ENCODE measurements at regions of chrX and their contacts with region 1.

Region 1: DNA sequence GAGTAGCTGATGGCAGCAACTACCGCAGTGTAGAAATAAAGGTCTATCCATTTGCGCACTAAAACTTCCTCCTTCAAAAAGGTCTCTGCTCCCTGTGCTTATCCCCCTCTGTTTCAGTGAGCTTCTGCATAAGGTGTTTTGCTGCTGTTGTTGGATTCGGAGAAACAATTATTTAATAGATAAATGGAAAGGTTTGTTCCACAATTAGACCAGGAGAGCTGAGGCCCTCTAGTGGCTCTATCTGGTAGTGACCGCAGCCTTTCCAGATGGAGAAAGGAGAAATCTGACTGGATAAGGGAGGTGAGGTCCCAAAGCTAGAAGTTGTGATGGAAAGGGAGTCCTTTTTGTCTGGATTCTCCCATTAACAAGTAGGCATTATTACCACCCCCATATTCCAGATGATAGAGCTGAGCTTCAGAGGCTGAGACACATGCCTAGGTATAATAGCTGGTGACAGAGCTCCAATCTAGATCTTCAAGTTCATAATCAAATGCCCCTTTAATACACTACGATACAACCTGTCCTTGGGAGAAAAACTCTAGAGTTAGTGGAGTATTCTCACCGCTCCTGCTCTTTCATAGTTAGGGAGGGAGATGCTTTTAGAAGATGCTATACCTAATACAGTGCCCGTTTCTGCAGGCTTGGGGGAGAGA is 5.1 kb upstream of the GABRQ start:
- DNase-seq: peak; percentile 8
- ATAC-seq: no peak
- H3K4me3 ChIP-seq: no peak overlapping the region
- H3K27ac ChIP-seq: no peak overlapping the region
- H3K4me1 ChIP-seq: no peaks in the 10 kb centered on the region
- H3K27me3 ChIP-seq: peaks cover 0 to 2% of the 10 kb centered on the region in 2 experiments; a peak in 1 of 5 replicates
- CTCF ChIP-seq: peak; percentile 61
- EP300 ChIP-seq: no peak
- POLR2A ChIP-seq: no peak
- RAD21 ChIP-seq: no peak

Region 2: DNA sequence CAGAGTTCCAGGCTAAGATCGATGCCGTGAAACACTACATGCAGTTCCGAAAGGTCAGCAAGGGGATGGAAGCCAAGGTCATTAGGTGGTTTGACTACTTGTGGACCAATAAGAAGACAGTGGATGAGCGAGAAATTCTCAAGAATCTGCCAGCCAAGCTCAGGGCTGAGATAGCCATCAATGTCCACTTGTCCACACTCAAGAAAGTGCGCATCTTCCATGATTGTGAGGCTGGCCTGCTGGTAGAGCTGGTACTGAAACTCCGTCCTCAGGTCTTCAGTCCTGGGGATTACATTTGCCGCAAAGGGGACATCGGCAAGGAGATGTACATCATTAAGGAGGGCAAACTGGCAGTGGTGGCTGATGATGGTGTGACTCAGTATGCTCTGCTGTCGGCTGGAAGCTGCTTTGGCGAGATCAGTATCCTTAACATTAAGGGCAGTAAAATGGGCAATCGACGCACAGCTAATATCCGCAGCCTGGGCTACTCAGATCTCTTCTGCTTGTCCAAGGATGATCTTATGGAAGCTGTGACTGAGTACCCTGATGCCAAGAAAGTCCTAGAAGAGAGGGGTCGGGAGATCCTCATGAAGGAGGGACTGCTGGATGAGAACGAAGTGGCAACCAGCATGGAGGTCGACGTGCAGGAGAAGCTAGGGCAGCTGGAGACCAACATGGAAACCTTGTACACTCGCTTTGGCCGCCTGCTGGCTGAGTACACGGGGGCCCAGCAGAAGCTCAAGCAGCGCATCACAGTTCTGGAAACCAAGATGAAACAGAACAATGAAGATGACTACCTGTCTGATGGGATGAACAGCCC is 888.7 kb before region 1 on chrX:
- CTCF ChIA-PET with region 1: interaction called, 12 read pairs
- POLR2A ChIA-PET with region 1: no interaction called
- in situ Hi-C with region 1: loop called (anchors 5 kb)
- intact Hi-C with region 1: loop called (anchors 1 kb)
- DNase-seq: no peak
- ATAC-seq: no peak
- H3K4me3 ChIP-seq: no peak overlapping the region
- H3K27ac ChIP-seq: no peak overlapping the region
- H3K4me1 ChIP-seq: no peaks in the 10 kb centered on the region
- H3K27me3 ChIP-seq: no peaks in the 10 kb centered on the region
- CTCF ChIP-seq: no peak
- EP300 ChIP-seq: no peak
- POLR2A ChIP-seq: no peak
- RAD21 ChIP-seq: no peak

Region 3: GRCh38 chrX:151753313-151754041 is 879.1 kb before region 1 on chrX:
- CTCF ChIA-PET with region 1: interaction called, 12 read pairs
- POLR2A ChIA-PET with region 1: no interaction called
- in situ Hi-C with region 1: no loop called
- intact Hi-C with region 1: loop called (anchors 1 kb)
- DNase-seq: peak; percentile 13
- ATAC-seq: peak; percentile 98
- H3K4me3 ChIP-seq: no peak overlapping the region
- H3K27ac ChIP-seq: no peak overlapping the region
- H3K4me1 ChIP-seq: no peaks in the 10 kb centered on the region
- H3K27me3 ChIP-seq: no peaks in the 10 kb centered on the region
- CTCF ChIP-seq: peak; percentile 85
- EP300 ChIP-seq: no peak
- POLR2A ChIP-seq: no peak
- RAD21 ChIP-seq: peak; percentile 70

Region 4: GRCh38 chrX:151852294-151852693 is 780.3 kb before region 1 on chrX:
- CTCF ChIA-PET with region 1: no interaction called
- POLR2A ChIA-PET with region 1: no interaction called
- in situ Hi-C with region 1: no loop called
- intact Hi-C with region 1: loop called (anchors 5 kb)
- DNase-seq: no peak
- ATAC-seq: peak; percentile 54; the same call in 2 of the 3 replicates
- H3K4me3 ChIP-seq: no peak overlapping the region
- H3K27ac ChIP-seq: no peak overlapping the region
- H3K4me1 ChIP-seq: no peaks in the 10 kb centered on the region
- H3K27me3 ChIP-seq: no peaks in the 10 kb centered on the region
- CTCF ChIP-seq: peak; percentile 45
- EP300 ChIP-seq: no peak
- POLR2A ChIP-seq: no peak
- RAD21 ChIP-seq: no peak

Region 5: DNA sequence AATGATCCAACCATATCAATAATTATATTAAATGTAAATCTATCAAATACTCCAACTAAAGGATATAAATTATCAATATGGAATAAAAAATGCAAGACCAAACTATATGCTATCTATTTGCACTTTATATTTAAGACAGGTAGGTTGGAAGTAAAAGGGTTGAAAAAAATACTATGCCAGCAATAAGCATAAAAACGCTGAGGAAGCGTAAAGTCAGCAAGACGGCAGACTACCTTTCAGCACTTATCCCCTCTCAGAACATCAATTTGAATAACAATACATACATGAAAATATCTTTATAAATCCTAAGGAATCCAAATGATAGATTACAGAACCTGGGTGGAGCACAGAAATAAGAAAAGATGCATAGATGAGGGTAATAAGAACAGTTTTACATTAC is 167.4 kb before region 1 on chrX:
- CTCF ChIA-PET with region 1: no interaction called
- POLR2A ChIA-PET with region 1: no interaction called
- in situ Hi-C with region 1: no loop called
- intact Hi-C with region 1: no loop called
- DNase-seq: no peak
- ATAC-seq: no peak
- H3K4me3 ChIP-seq: no peak overlapping the region
- H3K27ac ChIP-seq: no peak overlapping the region
- H3K4me1 ChIP-seq: no peaks in the 10 kb centered on the region
- H3K27me3 ChIP-seq: no peaks in the 10 kb centered on the region
- CTCF ChIP-seq: no peak
- EP300 ChIP-seq: no peak
- POLR2A ChIP-seq: no peak
- RAD21 ChIP-seq: no peak

Region 6: GRCh38 chrX:152821145-152821765 is 188.7 kb after region 1 on chrX:
- CTCF ChIA-PET with region 1: no interaction called
- POLR2A ChIA-PET with region 1: no interaction called
- in situ Hi-C with region 1: loop called (anchors 25 kb)
- intact Hi-C with region 1: no loop called
- DNase-seq: peak; percentile 23
- ATAC-seq: peak; percentile 56
- H3K4me3 ChIP-seq: no peak overlapping the region
- H3K27ac ChIP-seq: no peak overlapping the region
- H3K4me1 ChIP-seq: peaks cover 10% of the 10 kb centered on the region
- H3K27me3 ChIP-seq: no peaks in the 10 kb centered on the region
- CTCF ChIP-seq: peak; percentile 61
- EP300 ChIP-seq: no peak
- POLR2A ChIP-seq: no peak
- RAD21 ChIP-seq: no peak

Region 7: DNA sequence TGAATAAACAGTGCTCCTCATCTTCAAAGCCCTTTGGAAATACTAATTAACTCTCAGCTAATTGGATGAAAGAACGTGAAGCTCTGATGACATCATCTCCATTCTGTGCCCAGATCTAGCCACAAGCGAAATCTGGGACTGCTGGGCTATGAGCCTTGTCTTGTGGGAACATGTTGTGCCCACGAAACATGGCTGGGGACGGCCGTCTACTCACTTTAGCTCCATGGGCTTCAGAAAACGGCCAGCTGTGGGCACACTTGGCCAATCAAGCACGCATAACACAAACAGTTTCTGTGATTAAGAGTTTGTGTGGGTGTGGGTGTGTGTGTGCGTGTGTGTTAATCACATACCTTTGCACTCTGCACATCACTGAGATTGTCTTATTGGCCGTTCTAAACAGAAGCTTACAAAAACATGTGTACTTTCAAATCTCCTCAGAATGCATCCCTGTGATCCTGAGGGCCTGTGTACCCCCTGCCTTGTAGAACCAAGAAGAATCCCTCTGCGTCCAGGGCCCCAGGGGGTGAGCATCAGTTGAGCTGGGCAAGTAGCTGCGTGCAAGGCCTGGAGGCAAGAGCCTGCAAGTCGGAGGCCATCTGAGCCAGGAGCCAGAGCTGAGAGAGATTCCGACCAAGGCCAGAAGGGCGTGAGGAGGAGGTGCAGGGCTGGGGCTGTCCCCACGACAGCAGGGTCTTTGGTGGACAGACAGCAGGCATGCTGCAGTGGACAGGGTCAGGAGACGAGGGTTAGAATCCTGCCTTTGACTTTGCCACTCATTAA is 246.6 kb after region 1 on chrX:
- CTCF ChIA-PET with region 1: no interaction called
- POLR2A ChIA-PET with region 1: no interaction called
- in situ Hi-C with region 1: no loop called
- intact Hi-C with region 1: no loop called
- DNase-seq: no peak
- ATAC-seq: no peak
- H3K4me3 ChIP-seq: no peak overlapping the region
- H3K27ac ChIP-seq: no peak overlapping the region
- H3K4me1 ChIP-seq: peaks cover 15% of the 10 kb centered on the region
- H3K27me3 ChIP-seq: peaks cover 1 to 5% of the 10 kb centered on the region in 2 experiments; a peak in 2 of 5 replicates
- CTCF ChIP-seq: no peak
- EP300 ChIP-seq: no peak
- POLR2A ChIP-seq: no peak
- RAD21 ChIP-seq: no peak

Measured in HepG2 (cell line).